ENCODE measurements at regions of chr19 and their contacts with region 1.

Region 1: GRCh38 chr19:19145684-19146608 is 7.7 kb upstream of the TMEM161A start:
- DNase-seq: peak; percentile 92
- ATAC-seq: peak; percentile 98
- H3K4me3 Mint-ChIP-seq: no peak overlapping the region
- H3K27ac Mint-ChIP-seq: no peak overlapping the region
- H3K4me1 Mint-ChIP-seq: no peaks in the 10 kb centered on the region
- H3K27me3 Mint-ChIP-seq: no peaks in the 10 kb centered on the region
- CTCF ChIP-seq: peak; percentile 80

Region 2: GRCh38 chr19:19224852-19225494 is 79.0 kb after region 1 on chr19:
- CTCF ChIA-PET with region 1: interaction called, 6 read pairs
- POLR2A ChIA-PET with region 1: no interaction called
- intact Hi-C with region 1: loop called (anchors 5 kb)
- DNase-seq: peak; percentile 85
- ATAC-seq: peak; percentile 91
- H3K4me3 Mint-ChIP-seq: peak overlapping the region; percentile 56
- H3K27ac Mint-ChIP-seq: no peak overlapping the region
- H3K4me1 Mint-ChIP-seq: peaks cover 2% of the 10 kb centered on the region
- H3K27me3 Mint-ChIP-seq: peaks cover 10% of the 10 kb centered on the region
- CTCF ChIP-seq: peak; percentile 72